ENCODE measurements at regions of chr6 and their contacts with region 1.

Region 1: DNA sequence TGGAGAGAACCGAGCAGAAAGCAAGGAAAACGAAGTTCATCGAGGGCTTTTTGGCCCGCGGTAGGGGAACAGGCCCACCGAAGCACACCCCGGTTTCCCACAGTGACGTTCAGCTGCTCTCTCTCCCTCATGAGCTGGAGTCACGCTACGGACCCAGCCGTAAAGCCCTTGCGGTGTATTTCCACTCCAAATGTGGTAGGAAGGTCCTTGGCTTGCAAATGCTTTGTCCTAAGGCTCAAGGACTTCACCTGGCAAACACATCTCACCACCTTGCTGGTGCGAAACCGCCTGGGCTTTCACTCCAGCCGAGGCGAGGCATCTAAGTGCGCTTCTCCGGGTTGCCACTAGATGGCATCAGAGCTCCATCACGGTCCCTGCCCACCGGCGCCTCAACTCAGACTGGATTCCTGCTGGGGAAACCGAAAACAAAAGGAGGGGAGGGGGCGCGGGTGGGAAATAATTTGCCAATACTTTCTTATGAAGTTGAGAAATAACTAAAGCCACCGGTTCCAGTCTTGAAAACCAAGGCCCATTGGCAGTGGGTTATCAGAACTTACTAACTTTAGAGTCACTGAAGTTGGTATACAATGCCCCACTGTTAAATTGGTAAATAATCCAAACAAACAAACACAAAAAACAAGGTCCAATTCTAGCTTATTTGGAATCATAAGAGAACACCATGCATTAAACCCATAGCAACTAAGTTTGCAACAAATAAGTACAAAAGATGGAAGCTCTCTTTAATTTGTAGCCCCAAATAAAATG is 13.4 kb upstream of the FOXC1 start:
- DNase-seq: peak; percentile 66
- H3K4me3 Mint-ChIP-seq: no peak overlapping the region
- H3K27ac Mint-ChIP-seq: no peak overlapping the region
- H3K4me1 Mint-ChIP-seq: peaks cover 21% of the 10 kb centered on the region
- H3K27me3 Mint-ChIP-seq: peaks cover 34% of the 10 kb centered on the region
- CTCF ChIP-seq: peak; percentile 77

Region 2: GRCh38 chr6:1047981-1048541 is 548.2 kb before region 1 on chr6:
- CTCF ChIA-PET with region 1: no interaction called
- intact Hi-C with region 1: no loop called
- DNase-seq: no peak
- H3K4me3 Mint-ChIP-seq: no peak overlapping the region
- H3K27ac Mint-ChIP-seq: no peak overlapping the region
- H3K4me1 Mint-ChIP-seq: peaks cover 33% of the 10 kb centered on the region
- H3K27me3 Mint-ChIP-seq: no peaks in the 10 kb centered on the region
- CTCF ChIP-seq: no peak

Region 3: GRCh38 chr6:1513215-1513780 is 83.0 kb before region 1 on chr6:
- CTCF ChIA-PET with region 1: no interaction called
- intact Hi-C with region 1: no loop called
- DNase-seq: no peak
- H3K4me3 Mint-ChIP-seq: no peak overlapping the region
- H3K27ac Mint-ChIP-seq: no peak overlapping the region
- H3K4me1 Mint-ChIP-seq: no peaks in the 10 kb centered on the region
- H3K27me3 Mint-ChIP-seq: peaks cover 59% of the 10 kb centered on the region
- CTCF ChIP-seq: no peak

Region 4: DNA sequence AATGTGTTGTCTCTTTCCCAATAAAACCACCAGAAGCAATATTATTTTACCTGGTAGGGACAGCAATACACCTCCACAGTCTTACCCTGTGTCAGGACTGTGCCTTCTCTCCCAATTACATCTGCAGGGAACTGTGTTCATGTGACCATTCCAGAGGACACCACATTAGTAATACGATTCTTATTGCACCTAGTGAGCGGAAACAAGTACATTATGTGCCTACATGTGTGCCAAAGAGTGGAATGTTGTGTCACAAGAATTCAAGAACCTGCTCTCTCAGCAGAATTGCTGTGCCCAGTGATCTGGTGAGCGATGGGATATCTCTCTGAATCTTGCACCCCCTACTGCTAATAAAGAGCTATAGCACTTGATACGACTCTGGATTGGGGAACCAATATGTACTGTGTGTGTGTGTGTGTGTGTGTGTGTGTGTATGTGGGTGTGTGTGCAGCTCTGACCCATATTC is 43.9 kb before region 1 on chr6:
- CTCF ChIA-PET with region 1: no interaction called
- intact Hi-C with region 1: no loop called
- DNase-seq: peak; percentile 3
- H3K4me3 Mint-ChIP-seq: no peak overlapping the region
- H3K27ac Mint-ChIP-seq: no peak overlapping the region
- H3K4me1 Mint-ChIP-seq: peaks cover 9% of the 10 kb centered on the region
- H3K27me3 Mint-ChIP-seq: peaks cover 23% of the 10 kb centered on the region
- CTCF ChIP-seq: no peak

Region 5: GRCh38 chr6:2103644-2104523 is 507.6 kb after region 1 on chr6:
- CTCF ChIA-PET with region 1: interaction called, 13 read pairs
- intact Hi-C with region 1: no loop called
- DNase-seq: no peak
- H3K4me3 Mint-ChIP-seq: peak overlapping the region; percentile 54
- H3K27ac Mint-ChIP-seq: peak overlapping the region; percentile 66
- H3K4me1 Mint-ChIP-seq: peaks cover 8% of the 10 kb centered on the region
- H3K27me3 Mint-ChIP-seq: no peaks in the 10 kb centered on the region
- CTCF ChIP-seq: no peak

Region 6: GRCh38 chr6:2196079-2196679 is 599.9 kb after region 1 on chr6:
- CTCF ChIA-PET with region 1: no interaction called
- intact Hi-C with region 1: loop called (anchors 2 kb)
- DNase-seq: peak; percentile 30
- H3K4me3 Mint-ChIP-seq: no peak overlapping the region
- H3K27ac Mint-ChIP-seq: no peak overlapping the region
- H3K4me1 Mint-ChIP-seq: no peaks in the 10 kb centered on the region
- H3K27me3 Mint-ChIP-seq: no peaks in the 10 kb centered on the region
- CTCF ChIP-seq: peak; percentile 34

Region 7: DNA sequence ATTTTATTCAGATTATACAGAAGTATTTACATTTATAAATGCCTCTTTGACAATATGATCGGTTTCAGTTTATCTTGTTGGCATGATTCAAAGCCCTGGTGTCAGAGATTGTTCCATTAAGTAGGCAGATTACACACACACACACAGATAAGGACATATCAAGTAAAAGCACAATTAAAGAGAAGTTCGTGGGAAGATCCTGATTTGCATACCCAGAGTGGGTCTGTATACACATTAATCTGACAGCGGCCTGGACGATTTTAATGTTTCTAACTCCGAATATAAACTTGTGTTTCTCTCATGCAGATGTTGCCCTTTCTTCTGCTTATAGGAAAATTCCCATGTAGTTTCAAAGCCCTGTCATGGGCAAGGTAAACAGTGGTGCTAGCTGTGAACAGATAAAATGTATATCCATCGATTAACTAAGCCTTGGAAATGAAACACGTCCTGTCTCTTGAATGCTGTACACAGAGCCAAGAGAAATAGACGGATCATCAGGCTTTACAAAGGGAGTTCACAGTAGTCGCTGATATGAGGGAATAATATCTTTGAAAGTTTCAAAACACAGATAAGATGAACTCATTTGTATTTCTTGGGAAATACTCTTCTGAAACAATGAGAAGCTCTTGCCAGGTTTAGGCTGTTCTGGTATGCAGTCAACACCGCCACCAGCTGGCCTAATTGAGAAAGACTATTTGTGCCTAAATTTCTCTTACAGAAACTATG is 757.3 kb after region 1 on chr6:
- CTCF ChIA-PET with region 1: interaction called, 4 read pairs
- intact Hi-C with region 1: loop called (anchors 5 kb)
- DNase-seq: peak; percentile 68
- H3K4me3 Mint-ChIP-seq: no peak overlapping the region
- H3K27ac Mint-ChIP-seq: no peak overlapping the region
- H3K4me1 Mint-ChIP-seq: no peaks in the 10 kb centered on the region
- H3K27me3 Mint-ChIP-seq: no peaks in the 10 kb centered on the region
- CTCF ChIP-seq: peak; percentile 42

Region 8: GRCh38 chr6:2634139-2634964 is 1038.1 kb after region 1 on chr6:
- CTCF ChIA-PET with region 1: no interaction called
- intact Hi-C with region 1: loop called (anchors 5 kb)
- DNase-seq: peak; percentile 86
- H3K4me3 Mint-ChIP-seq: peak overlapping the region; percentile 70
- H3K27ac Mint-ChIP-seq: no peak overlapping the region
- H3K4me1 Mint-ChIP-seq: peaks cover 17% of the 10 kb centered on the region
- H3K27me3 Mint-ChIP-seq: peaks cover 8% of the 10 kb centered on the region
- CTCF ChIP-seq: peak; percentile 93

Region 9: GRCh38 chr6:2695454-2696095 is 1099.3 kb after region 1 on chr6:
- CTCF ChIA-PET with region 1: no interaction called
- intact Hi-C with region 1: loop called (anchors 2 kb)
- DNase-seq: no peak
- H3K4me3 Mint-ChIP-seq: no peak overlapping the region
- H3K27ac Mint-ChIP-seq: no peak overlapping the region
- H3K4me1 Mint-ChIP-seq: no peaks in the 10 kb centered on the region
- H3K27me3 Mint-ChIP-seq: no peaks in the 10 kb centered on the region
- CTCF ChIP-seq: no peak